ENCODE measurements at regions of chr10 and their contacts with region 1.

Region 1: DNA sequence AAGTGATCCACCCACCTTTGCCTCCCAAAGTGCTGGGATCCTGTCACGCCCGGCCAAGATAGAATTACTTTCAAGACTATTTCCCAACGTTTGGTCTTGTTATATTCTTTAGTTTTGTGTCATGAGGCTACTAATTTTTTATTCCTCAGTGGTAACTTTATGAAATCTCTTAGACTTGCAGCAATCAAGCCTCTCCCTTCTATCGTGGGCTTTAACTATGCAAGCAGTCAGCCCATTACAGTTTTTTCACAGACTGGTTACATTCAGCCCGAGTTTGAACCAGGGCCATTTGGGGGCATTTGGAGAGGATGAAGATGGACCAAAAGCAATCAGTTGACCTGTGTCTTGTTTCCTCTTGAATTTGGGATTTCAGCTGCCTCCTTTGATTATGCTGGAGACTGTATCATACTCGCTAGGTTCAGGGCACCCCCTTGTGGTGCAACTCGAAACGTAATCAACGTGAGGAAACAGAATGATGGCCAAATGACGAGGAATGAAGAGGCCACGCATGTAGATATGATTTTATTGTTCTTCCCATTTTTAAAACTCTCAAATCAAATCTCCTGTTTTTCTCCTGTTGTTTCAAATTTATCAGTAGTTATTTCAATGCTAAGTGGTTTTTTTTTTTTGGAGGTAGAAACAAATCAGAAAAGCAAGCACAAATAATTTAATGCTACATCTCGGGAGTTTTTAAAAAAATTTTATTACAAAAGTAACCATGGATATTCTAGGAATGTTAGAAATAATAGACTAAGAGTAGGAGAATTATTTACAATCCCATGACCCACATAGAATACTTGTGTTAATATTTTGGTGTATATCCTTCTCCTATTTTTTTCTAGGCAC is 151.6 kb downstream of the KIAA1217 start:
- DNase-seq: peak; percentile 77
- ATAC-seq: peak; percentile 77
- H3K4me3 ChIP-seq: no peak overlapping the region
- H3K27ac ChIP-seq: no peak overlapping the region
- H3K4me1 ChIP-seq: no peaks in the 10 kb centered on the region
- H3K27me3 ChIP-seq: no peaks in the 10 kb centered on the region
- CTCF ChIP-seq: peak; percentile 83

Region 2: DNA sequence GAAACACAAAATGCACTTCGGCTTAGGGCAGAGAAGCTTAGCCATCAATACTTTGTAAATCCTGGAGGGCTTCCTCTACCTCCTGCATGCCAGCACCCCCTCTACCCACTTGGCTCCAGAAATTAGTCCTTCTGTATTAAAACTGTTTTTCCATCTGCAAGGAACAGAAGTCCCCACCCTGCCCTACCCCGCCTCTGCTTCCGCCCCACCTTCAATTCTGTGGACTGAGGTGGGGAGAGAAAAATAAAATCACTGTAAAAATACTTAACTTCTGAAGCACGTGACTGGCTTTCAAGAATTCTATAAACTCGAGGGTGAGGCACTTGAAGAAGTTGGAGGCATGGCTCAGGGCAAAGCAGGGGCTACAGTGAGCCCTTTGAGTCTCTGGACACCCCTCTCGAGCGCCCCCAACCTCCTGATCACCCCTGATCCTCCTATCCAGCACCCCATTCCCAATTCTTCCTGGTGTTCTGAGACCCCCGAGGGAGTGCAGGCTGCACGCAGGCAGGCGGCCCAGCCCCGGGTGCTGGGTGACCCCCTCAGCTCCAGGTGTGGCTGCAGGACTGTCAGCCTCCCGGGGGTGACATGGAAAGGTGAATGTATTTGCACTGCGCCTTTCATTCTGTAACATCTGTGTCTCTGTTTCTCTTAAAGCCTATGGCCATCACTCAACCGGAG is 158.9 kb before region 1 on chr10:
- CTCF ChIA-PET with region 1: no interaction called
- POLR2A ChIA-PET with region 1: no interaction called
- intact Hi-C with region 1: loop called (anchors 1 kb)
- DNase-seq: no peak
- ATAC-seq: no peak
- H3K4me3 ChIP-seq: no peak overlapping the region
- H3K27ac ChIP-seq: no peak overlapping the region
- H3K4me1 ChIP-seq: peaks cover 6% of the 10 kb centered on the region
- H3K27me3 ChIP-seq: no peaks in the 10 kb centered on the region
- CTCF ChIP-seq: no peak

Region 3: DNA sequence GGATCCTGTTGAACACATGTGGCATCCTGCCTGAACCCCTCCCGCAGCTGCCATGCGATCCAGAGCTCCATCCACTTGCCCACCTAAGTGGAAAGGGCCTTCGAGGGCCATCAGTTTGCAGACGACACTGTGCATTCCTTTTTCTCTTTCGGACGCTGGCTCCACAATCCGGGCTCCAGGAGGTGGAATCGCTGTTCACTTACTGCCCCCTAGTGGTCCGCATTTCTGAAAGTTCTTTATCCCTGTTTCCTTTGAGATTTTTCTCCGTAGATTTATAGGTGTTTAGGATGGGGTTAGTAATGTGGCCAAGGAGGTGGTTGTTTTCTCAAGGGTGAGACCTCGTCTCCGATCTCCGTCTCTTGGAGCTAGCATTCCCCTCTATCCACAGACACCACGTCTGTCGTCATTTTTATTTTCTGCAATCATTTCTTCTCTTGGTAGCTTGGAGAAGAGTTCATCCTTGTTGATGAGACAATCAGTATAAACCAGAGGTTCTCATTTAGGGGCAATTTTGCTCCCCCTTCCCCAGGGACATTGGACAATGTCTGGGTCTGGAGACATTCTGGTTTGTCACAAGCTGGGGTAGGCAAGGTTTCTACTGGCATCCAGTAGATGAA is 158.6 kb after region 1 on chr10:
- CTCF ChIA-PET with region 1: no interaction called
- POLR2A ChIA-PET with region 1: no interaction called
- intact Hi-C with region 1: loop called (anchors 10 kb)
- DNase-seq: peak; percentile 68
- ATAC-seq: peak; percentile 58; the same call in 1 of the 2 replicates
- H3K4me3 ChIP-seq: no peak overlapping the region
- H3K27ac ChIP-seq: no peak overlapping the region
- H3K4me1 ChIP-seq: no peaks in the 10 kb centered on the region
- H3K27me3 ChIP-seq: no peaks in the 10 kb centered on the region
- CTCF ChIP-seq: peak; percentile 78

Region 4: GRCh38 chr10:24616536-24616935 is 256.0 kb after region 1 on chr10:
- CTCF ChIA-PET with region 1: no interaction called
- POLR2A ChIA-PET with region 1: no interaction called
- intact Hi-C with region 1: no loop called
- DNase-seq: peak; percentile 59
- ATAC-seq: peak; percentile 82
- H3K4me3 ChIP-seq: 0 out of 2 replicates have a peak overlapping the region, but pooled peaks have one; percentile 4
- H3K27ac ChIP-seq: peak overlapping the region; percentile 63
- H3K4me1 ChIP-seq: peaks cover 35% of the 10 kb centered on the region
- H3K27me3 ChIP-seq: no peaks in the 10 kb centered on the region
- CTCF ChIP-seq: no peak

Region 5: GRCh38 chr10:24929056-24929544 is 568.6 kb after region 1 on chr10:
- CTCF ChIA-PET with region 1: no interaction called
- POLR2A ChIA-PET with region 1: no interaction called
- intact Hi-C with region 1: no loop called
- DNase-seq: no peak
- ATAC-seq: no peak
- H3K4me3 ChIP-seq: no peak overlapping the region
- H3K27ac ChIP-seq: no peak overlapping the region
- H3K4me1 ChIP-seq: no peaks in the 10 kb centered on the region
- H3K27me3 ChIP-seq: no peaks in the 10 kb centered on the region
- CTCF ChIP-seq: no peak